Naive thymus-derived CD4-positive, alpha-beta T cell (primary cell): ENCODE measurements at regions of chr3 and their contacts with region 1.

Region 1: DNA sequence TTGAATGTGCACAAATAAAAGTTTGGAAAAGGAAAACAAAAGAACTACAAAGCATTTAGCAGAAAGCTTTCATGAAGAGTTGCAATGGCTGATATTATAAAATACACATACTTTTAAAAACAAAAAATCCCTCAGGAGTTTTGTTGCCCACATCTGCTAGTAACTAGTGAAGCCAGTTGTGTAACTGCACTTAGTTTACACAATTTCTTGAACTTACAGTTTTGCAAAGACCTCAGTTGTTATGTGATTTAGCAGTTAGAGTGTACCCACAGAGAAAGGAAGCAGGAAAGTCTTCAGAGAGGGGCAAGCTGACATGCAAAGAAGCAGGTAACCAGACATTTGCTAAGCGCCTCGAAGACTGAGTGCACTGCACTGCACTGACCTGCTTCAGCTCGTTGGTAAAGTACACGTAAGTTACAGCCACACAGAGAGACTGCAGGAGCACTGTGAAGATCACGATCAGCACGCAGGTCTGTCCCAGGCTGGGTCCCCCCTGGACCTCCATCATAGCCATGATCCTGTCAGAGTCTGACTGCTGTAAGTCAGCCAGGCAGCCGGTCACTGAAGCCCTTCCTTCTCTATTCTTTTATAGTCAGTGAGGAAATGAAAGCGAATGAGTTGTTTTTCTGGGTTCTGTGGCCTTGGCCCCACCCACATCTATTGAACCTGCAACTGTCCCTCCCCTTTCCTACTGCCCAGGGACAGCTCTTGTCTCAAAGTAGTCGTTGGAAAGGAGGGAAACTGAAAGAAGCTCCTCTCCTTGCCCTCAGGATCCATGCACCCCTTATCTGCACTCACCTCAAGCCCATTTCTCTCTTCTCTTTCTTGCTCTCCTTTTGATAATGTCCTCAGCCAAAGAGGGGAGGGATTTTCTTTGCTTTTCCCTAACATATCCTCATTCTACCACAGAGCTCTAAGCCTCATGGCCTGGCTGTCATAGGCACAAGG is at the start of gene TNFSF10:
- DNase-seq: peak; percentile 19 to 71 (median 60)
- ATAC-seq: peak; percentile 87
- H3K4me3 ChIP-seq: peak within 1 kb of the TSS; percentile 86
- H3K4me3 Mint-ChIP-seq: peak within 1 kb of the TSS; percentile 89 to 100 (median 96)
- H3K27ac ChIP-seq: peak within 1 kb of the TSS; percentile 85
- H3K27ac Mint-ChIP-seq: peak within 1 kb of the TSS; percentile 88 to 100 (median 99)
- H3K4me1 ChIP-seq: peaks cover 26 to 34% of the 10 kb centered on the region in 2 donors
- H3K4me1 Mint-ChIP-seq: peaks cover 36 to 63% (median 53%) of the 10 kb centered on the region in 7 donors
- H3K27me3 ChIP-seq: no peaks in the 10 kb centered on the region
- H3K27me3 Mint-ChIP-seq: no peaks in the 10 kb centered on the region
- total RNA-seq, gene TNFSF10: 10.8 to 234 (median 45.0) TPM

Region 2: DNA sequence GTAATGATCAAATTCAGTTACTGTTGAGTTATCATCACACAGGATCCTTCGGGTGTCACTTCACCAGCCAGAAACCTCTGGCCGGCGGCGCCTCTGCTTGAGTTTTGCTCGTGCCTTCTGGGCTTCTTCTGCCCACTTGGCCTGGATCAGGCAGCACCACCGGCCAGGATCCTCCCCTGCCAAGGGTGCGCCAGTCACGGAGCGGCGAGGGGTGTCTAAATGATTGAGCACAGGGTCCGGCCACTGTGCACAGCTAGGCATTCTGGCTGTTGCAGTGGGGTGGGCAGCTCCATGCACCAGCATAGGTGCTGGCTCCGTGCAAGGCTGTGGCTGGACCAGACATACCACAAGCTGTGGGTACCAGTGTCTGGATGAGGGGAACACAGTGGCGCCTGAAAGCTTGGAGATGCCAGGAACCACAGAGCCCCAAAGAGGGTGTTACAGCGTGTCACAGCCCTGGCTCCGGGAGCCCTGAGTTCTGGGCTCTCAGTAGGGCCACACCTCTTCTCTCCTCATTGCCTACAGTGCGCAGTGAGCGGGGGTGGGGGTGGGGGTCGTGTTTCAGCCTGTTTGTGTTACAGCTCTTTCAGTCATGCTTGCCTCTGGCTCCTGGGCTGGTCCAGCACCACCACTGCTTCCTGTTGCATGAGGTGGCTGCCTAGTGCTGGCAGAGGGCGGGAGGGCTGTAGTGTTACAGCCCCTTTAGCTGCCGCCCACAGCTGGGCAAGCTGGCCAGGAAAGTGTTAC is 314.4 kb before region 1 on chr3:
- CTCF ChIA-PET with region 1: no interaction called
- POLR2A ChIA-PET with region 1: no interaction called
- intact Hi-C with region 1: no loop called
- DNase-seq: no peak
- ATAC-seq: peak; percentile 36
- H3K4me3 ChIP-seq: no peak overlapping the region
- H3K4me3 Mint-ChIP-seq: no peak overlapping the region
- H3K27ac ChIP-seq: no peak overlapping the region
- H3K27ac Mint-ChIP-seq: peak overlapping the region in 1 of 9 donors; percentile 67
- H3K4me1 ChIP-seq: no peaks in the 10 kb centered on the region
- H3K4me1 Mint-ChIP-seq: peaks cover 4 to 31% (median 13%) of the 10 kb centered on the region in 7 donors
- H3K27me3 ChIP-seq: no peaks in the 10 kb centered on the region
- H3K27me3 Mint-ChIP-seq: no peaks in the 10 kb centered on the region

Region 3: GRCh38 chr3:172506094-172506493 is 17.1 kb before region 1 on chr3:
- CTCF ChIA-PET with region 1: interaction called, 3 read pairs
- POLR2A ChIA-PET with region 1: interaction called, 45 read pairs
- intact Hi-C with region 1: loop called in 1 of 2 experiments (anchors 2 kb)
- DNase-seq: no peak
- ATAC-seq: no peak
- H3K4me3 ChIP-seq: no peak overlapping the region
- H3K4me3 Mint-ChIP-seq: peak overlapping the region in 1 of 10 donors; percentile 9
- H3K27ac ChIP-seq: no peak overlapping the region
- H3K27ac Mint-ChIP-seq: peak overlapping the region in 8 of 9 donors; percentile 44 to 88 (median 64)
- H3K4me1 ChIP-seq: peaks cover 0 to 6% of the 10 kb centered on the region in 2 donors
- H3K4me1 Mint-ChIP-seq: peaks cover 12 to 56% (median 37%) of the 10 kb centered on the region in 7 donors
- H3K27me3 ChIP-seq: no peaks in the 10 kb centered on the region
- H3K27me3 Mint-ChIP-seq: no peaks in the 10 kb centered on the region

Region 4: DNA sequence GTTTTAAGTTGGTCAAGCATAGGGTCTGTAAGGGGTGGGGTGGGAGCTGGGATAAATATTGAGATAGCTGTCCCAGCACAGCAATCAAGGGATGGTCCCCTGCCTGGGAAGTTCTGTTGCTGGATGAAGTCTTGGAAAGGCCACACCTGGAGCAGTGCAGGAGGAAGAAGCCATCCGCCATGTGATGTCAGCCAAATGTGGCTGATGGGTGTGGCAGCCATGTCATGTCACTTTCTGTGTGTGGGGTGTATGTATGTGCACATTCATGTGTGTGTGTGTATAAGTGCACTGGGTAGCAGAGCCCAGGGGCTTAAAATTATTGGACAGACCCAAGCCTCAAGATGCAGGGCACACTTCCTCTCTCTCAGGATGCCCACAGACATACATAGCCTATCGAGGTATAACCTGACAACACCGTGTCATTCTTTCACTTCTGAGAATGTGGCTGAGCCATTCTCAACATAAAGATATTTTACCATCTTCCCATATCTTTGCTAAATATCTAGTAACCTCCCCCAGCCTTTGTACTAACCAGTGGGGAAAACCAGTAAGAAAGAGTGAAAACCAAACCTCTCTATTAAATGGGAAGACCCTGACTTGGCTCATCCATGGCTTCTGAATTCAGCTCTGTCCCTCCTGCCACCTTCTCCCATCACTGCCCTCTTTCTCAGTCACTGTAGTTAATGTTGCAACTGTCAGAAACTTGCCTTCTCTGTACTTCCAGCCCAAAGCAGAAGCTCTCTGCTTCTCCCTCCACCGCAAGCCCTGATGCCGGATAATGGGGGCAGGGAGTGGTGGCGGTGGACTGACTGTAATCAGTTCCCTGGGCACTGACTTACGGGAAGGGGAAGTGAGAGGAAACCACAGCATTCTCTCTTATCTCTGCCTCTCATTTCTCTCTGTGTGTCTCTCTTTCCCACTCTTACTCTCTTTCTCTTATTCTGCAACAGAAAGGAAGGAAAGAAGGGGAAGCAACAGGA is 11.1 kb before region 1 on chr3:
- CTCF ChIA-PET with region 1: interaction called, 3 read pairs
- POLR2A ChIA-PET with region 1: interaction called, 45 read pairs
- intact Hi-C with region 1: loop called (anchors 1 kb)
- DNase-seq: peak in 7 of 9 donors; percentile 28 to 76 (median 48)
- ATAC-seq: peak; percentile 87
- H3K4me3 ChIP-seq: peak overlapping the region; percentile 2
- H3K4me3 Mint-ChIP-seq: peak overlapping the region; percentile 62 to 93 (median 80)
- H3K27ac ChIP-seq: peak overlapping the region; percentile 61
- H3K27ac Mint-ChIP-seq: peak overlapping the region; percentile 88 to 100 (median 93)
- H3K4me1 ChIP-seq: peaks cover 52 to 56% of the 10 kb centered on the region in 2 donors
- H3K4me1 Mint-ChIP-seq: peaks cover 65 to 91% (median 84%) of the 10 kb centered on the region in 7 donors
- H3K27me3 ChIP-seq: no peaks in the 10 kb centered on the region
- H3K27me3 Mint-ChIP-seq: no peaks in the 10 kb centered on the region

Region 5: GRCh38 chr3:172536993-172537419 is 13.9 kb after region 1 on chr3:
- CTCF ChIA-PET with region 1: no interaction called
- POLR2A ChIA-PET with region 1: interaction called, 13 read pairs
- intact Hi-C with region 1: loop called (anchors 2 kb)
- DNase-seq: peak in 2 of 9 donors; percentile 32 to 40
- ATAC-seq: peak; percentile 80
- H3K4me3 ChIP-seq: no peak overlapping the region
- H3K4me3 Mint-ChIP-seq: peak overlapping the region; percentile 50 to 77 (median 62)
- H3K27ac ChIP-seq: peak overlapping the region; percentile 41
- H3K27ac Mint-ChIP-seq: peak overlapping the region; percentile 69 to 90 (median 82)
- H3K4me1 ChIP-seq: peaks cover 15 to 33% of the 10 kb centered on the region in 2 donors
- H3K4me1 Mint-ChIP-seq: peaks cover 16 to 66% (median 46%) of the 10 kb centered on the region in 7 donors
- H3K27me3 ChIP-seq: no peaks in the 10 kb centered on the region
- H3K27me3 Mint-ChIP-seq: no peaks in the 10 kb centered on the region

Region 6: DNA sequence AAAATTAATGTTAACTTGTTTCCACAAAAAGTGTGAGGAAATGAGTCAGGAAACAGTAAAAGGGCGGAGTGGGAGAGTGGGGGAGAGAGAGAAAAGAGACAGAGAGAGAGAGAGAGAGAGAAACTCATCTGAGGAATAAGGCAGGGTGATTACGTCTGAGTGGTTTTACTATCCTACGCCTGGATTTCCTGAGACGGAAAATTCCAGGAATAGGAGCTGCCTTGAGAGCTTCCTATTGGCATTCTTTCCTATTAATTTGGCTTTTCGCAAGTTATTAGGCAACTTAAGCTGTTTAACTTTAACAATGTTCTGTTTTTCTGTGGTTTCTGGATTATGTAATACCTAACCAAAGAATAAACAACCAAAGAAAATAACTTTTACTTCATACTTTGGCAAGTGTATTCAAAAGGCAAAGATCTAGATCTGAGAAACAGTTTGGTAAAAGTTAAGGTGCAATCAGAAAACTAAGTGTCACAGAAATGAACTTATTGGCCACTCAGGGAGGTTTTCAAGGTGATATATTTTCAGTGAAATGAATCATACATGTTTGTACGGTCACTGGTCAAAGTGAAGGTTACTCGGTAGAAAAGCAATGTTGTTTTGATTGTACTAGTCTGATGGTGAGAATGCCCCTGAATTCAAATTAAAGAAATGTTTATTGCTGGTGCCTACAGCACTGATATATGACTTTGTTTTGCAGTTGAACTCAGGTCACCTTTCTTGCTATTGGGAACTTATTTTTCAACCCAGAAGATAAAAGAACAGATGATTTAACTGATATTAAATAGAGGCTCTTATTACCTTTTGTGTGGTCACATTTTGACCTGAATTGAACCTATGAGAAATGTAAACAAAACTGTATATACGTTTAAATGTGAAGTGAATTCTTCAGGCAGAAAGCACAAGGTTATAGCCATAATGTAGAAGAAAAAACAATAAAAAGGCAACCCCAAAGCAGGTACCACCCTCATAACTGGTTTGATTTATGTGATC is 40.0 kb after region 1 on chr3:
- CTCF ChIA-PET with region 1: no interaction called
- POLR2A ChIA-PET with region 1: no interaction called
- intact Hi-C with region 1: loop called in 1 of 2 experiments (anchors 2 kb)
- DNase-seq: peak in 3 of 9 donors; percentile 19 to 38 (median 22)
- ATAC-seq: peak; percentile 26
- H3K4me3 ChIP-seq: peak overlapping the region; percentile 26
- H3K4me3 Mint-ChIP-seq: peak overlapping the region in 9 of 10 donors; percentile 36 to 82 (median 66)
- H3K27ac ChIP-seq: no peak overlapping the region
- H3K27ac Mint-ChIP-seq: peak overlapping the region; percentile 22 to 92 (median 77)
- H3K4me1 ChIP-seq: peaks cover 0 to 15% of the 10 kb centered on the region in 2 donors
- H3K4me1 Mint-ChIP-seq: peaks cover 15 to 54% (median 26%) of the 10 kb centered on the region in 7 donors
- H3K27me3 ChIP-seq: no peaks in the 10 kb centered on the region
- H3K27me3 Mint-ChIP-seq: no peaks in the 10 kb centered on the region